B cell (primary cell): ENCODE measurements at regions of chr3 and their contacts with region 1.

Region 1: GRCh38 chr3:50436114-50436674 is 67.2 kb downstream of the CACNA2D2 start:
- DNase-seq: peak; percentile 73
- ATAC-seq: peak; percentile 68
- H3K4me3 ChIP-seq: no peak overlapping the region
- H3K4me3 Mint-ChIP-seq: no peak overlapping the region
- H3K27ac ChIP-seq: no peak overlapping the region
- H3K27ac Mint-ChIP-seq: no peak overlapping the region
- H3K4me1 ChIP-seq: no peaks in the 10 kb centered on the region
- H3K4me1 Mint-ChIP-seq: no peaks in the 10 kb centered on the region
- H3K27me3 ChIP-seq: peaks cover 0 to 8% (median 1%) of the 10 kb centered on the region in 4 experiments
- H3K27me3 Mint-ChIP-seq: peaks cover 12% of the 10 kb centered on the region
- CTCF ChIP-seq: peak; percentile 80

Region 2: DNA sequence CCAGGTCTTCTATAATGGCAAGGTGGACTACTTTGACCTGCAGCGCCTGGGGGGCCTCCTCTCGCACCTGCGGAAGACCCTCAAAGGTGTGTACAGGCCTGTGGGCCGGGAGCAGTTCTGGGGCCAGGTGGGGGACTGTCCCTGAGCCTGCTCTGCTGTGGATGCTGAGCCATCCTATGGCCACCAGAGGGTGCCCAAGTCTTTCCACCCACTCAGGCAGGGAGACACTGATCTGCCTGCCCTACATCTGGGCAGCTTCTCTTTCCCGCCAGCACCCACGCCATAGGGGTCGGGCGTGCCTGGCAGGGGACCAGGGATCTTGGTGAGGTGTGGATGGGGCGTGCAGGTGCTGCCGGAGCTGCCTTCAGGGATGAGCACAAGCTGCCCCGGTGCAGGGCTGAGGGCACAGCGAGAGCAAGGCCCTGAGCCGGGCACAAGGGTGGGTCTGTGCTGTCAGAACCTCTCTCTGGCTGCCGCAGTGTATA is 732.7 kb before region 1 on chr3:
- CTCF ChIA-PET with region 1: no interaction called
- POLR2A ChIA-PET with region 1: no interaction called
- intact Hi-C with region 1: no loop called
- DNase-seq: peak; percentile 81
- ATAC-seq: peak; percentile 99
- H3K4me3 ChIP-seq: no peak overlapping the region
- H3K4me3 Mint-ChIP-seq: no peak overlapping the region
- H3K27ac ChIP-seq: no peak overlapping the region
- H3K27ac Mint-ChIP-seq: peak overlapping the region; percentile 59
- H3K4me1 ChIP-seq: no peaks in the 10 kb centered on the region
- H3K4me1 Mint-ChIP-seq: peaks cover 6% of the 10 kb centered on the region
- H3K27me3 ChIP-seq: no peaks in the 10 kb centered on the region
- H3K27me3 Mint-ChIP-seq: no peaks in the 10 kb centered on the region
- CTCF ChIP-seq: peak; percentile 87

Region 3: GRCh38 chr3:50542177-50543034 is 106.2 kb after region 1 on chr3:
- CTCF ChIA-PET with region 1: interaction called, 27 read pairs
- POLR2A ChIA-PET with region 1: no interaction called
- intact Hi-C with region 1: no loop called
- DNase-seq: peak; percentile 73
- ATAC-seq: peak; percentile 71
- H3K4me3 ChIP-seq: no peak overlapping the region
- H3K4me3 Mint-ChIP-seq: no peak overlapping the region
- H3K27ac ChIP-seq: no peak overlapping the region
- H3K27ac Mint-ChIP-seq: no peak overlapping the region
- H3K4me1 ChIP-seq: no peaks in the 10 kb centered on the region
- H3K4me1 Mint-ChIP-seq: no peaks in the 10 kb centered on the region
- H3K27me3 ChIP-seq: peaks cover 0 to 16% (median 0%) of the 10 kb centered on the region in 4 experiments
- H3K27me3 Mint-ChIP-seq: peaks cover 18% of the 10 kb centered on the region
- CTCF ChIP-seq: peak; percentile 97

Region 4: DNA sequence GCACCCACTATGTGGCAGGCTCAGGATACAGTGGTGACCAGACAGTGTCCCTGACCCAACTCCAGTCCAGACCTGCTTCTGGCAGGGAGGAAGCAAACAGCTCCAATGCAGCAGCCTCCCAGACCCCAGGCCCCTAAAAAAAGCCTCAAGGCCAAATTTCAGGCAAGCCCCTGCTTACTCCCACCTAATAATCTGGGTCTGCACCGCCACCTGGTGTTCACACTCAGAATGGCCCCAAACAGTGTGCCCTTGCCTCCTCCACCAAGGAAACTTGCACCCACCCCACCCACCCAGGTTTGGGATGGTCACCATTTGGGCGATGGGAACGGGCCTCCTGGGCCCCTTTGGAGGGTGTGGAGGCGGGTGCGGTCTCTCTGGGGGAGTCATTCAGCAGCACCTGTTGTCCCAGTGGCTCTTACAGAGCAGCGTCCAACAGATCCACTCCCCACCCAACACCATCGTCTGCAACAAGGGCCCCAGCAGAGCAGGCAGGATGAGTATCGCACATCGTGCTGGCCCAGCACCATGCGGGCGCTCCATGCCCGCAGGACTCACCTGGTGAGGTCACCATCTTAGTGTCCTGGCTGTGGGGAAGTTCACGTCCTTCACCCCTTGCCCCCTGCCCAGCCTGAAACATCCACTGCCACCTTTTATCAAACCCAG is 114.0 kb after region 1 on chr3:
- CTCF ChIA-PET with region 1: interaction called, 4 read pairs
- POLR2A ChIA-PET with region 1: no interaction called
- intact Hi-C with region 1: loop called (anchors 1 kb)
- DNase-seq: peak; percentile 70
- ATAC-seq: peak; percentile 68
- H3K4me3 ChIP-seq: no peak overlapping the region
- H3K4me3 Mint-ChIP-seq: no peak overlapping the region
- H3K27ac ChIP-seq: no peak overlapping the region
- H3K27ac Mint-ChIP-seq: no peak overlapping the region
- H3K4me1 ChIP-seq: no peaks in the 10 kb centered on the region
- H3K4me1 Mint-ChIP-seq: no peaks in the 10 kb centered on the region
- H3K27me3 ChIP-seq: peaks cover 0 to 3% (median 0%) of the 10 kb centered on the region in 4 experiments
- H3K27me3 Mint-ChIP-seq: no peaks in the 10 kb centered on the region
- CTCF ChIP-seq: peak; percentile 84

Region 5: DNA sequence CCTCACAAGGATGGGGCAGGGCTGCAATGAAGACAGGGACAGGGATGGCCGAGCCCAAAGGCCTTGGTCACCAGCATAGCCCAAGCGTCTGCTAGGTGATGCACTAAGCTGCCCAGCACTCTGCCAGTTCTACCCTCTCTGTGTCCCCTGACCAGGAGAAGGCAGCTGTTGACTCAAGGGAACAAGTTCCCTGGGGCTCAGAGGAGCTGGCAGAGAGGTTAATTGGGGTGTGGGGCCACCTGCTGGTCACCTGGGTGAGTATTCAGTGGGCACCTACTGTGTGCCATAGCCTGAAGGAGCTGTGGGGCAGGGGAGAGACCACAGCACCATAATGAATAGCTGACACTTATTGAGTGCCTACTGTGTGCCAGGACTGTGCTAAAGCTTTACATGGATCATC is 216.5 kb after region 1 on chr3:
- CTCF ChIA-PET with region 1: no interaction called
- POLR2A ChIA-PET with region 1: no interaction called
- intact Hi-C with region 1: loop called (anchors 2 kb)
- DNase-seq: peak; percentile 56
- ATAC-seq: peak; percentile 68
- H3K4me3 ChIP-seq: no peak overlapping the region
- H3K4me3 Mint-ChIP-seq: no peak overlapping the region
- H3K27ac ChIP-seq: no peak overlapping the region
- H3K27ac Mint-ChIP-seq: no peak overlapping the region
- H3K4me1 ChIP-seq: no peaks in the 10 kb centered on the region
- H3K4me1 Mint-ChIP-seq: no peaks in the 10 kb centered on the region
- H3K27me3 ChIP-seq: no peaks in the 10 kb centered on the region
- H3K27me3 Mint-ChIP-seq: no peaks in the 10 kb centered on the region
- CTCF ChIP-seq: peak; percentile 27

Region 6: GRCh38 chr3:50759015-50759414 is 322.8 kb after region 1 on chr3:
- CTCF ChIA-PET with region 1: no interaction called
- POLR2A ChIA-PET with region 1: no interaction called
- intact Hi-C with region 1: no loop called
- DNase-seq: no peak
- ATAC-seq: no peak
- H3K4me3 ChIP-seq: no peak overlapping the region
- H3K4me3 Mint-ChIP-seq: no peak overlapping the region
- H3K27ac ChIP-seq: no peak overlapping the region
- H3K27ac Mint-ChIP-seq: no peak overlapping the region
- H3K4me1 ChIP-seq: no peaks in the 10 kb centered on the region
- H3K4me1 Mint-ChIP-seq: no peaks in the 10 kb centered on the region
- H3K27me3 ChIP-seq: no peaks in the 10 kb centered on the region
- H3K27me3 Mint-ChIP-seq: peaks cover 11% of the 10 kb centered on the region
- CTCF ChIP-seq: no peak